ENCODE measurements at regions of chr6 and their contacts with region 1.

Region 1: DNA sequence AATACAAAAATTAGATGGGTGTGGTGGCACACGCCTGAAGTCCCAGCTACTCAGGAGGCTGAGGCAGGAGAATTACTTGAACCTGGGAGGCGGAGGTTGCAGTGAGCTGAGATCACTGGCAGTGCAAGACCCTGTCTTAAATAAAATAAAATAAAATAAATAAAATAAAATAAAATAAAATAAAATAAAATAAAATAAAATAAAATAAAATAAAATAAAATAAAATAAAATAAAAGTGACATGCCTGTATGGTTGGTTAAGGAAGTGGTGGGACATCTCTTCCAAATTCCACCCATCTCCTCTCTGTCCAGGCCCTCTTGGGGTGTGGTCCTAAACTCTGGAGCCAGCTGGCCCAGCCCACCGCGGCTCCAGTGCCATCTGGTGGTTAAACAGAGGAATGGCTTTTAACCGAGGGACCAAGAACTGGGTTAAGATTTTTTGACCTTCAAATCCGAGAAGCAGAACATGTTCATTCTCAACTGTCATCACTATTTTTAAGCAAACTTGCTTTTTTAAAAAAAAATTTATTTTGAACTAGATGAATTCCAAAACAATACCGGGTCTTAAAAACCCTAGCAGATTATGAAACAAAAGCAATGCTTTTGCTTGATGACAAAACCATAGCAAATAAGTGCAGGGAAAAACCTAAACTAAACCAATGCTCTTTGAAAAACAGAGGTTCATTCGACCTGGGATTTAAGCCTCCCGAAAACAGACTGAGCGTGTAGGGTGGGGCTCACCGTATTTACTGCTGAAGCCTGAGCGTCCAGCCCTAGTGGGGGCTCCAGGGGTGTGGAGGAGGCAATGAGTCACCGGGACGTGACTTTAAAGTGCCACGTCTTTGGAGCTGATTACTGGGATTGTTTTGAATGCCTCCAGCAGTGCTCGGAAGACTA is 68.8 kb downstream of the CDC5L start:
- DNase-seq: peak; percentile 56
- H3K4me3 Mint-ChIP-seq: no peak overlapping the region
- H3K27ac Mint-ChIP-seq: no peak overlapping the region
- H3K4me1 Mint-ChIP-seq: no peaks in the 10 kb centered on the region
- H3K27me3 Mint-ChIP-seq: peaks cover 3% of the 10 kb centered on the region

Region 2: DNA sequence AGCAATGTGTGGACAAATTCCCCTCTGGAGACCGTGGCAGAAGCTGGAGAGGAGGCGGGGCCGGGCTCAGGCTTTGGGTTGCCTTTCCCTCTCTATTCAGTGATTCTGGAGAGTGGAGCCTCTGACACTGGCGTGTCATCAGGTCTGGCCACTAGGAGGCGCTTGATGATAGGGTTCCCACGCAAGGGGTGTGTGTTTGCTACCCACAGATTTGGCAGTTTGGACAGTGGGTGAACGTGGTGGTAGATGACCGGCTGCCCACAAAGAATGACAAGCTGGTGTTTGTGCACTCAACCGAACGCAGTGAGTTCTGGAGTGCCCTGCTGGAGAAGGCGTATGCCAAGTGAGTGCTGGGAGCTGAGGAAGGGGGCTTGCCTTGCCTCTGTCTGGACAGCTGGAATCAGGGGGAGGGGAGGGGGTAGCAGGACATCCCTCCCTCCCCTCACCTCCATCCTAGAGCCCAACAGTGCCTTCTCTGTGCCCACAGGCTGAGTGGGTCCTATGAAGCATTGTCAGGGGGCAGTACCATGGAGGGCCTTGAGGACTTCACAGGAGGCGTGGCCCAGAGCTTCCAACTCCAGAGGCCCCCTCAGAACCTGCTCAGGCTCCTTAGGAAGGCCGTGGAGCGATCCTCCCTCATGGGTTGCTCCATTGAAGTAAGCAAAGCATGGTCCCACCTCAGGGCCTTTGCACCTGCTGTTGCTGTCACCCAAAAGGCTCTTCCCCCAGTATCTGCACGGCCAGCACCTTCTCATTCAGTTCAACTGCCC is 283.4 kb before region 1 on chr6:
- CTCF ChIA-PET with region 1: no interaction called
- intact Hi-C with region 1: loop called (anchors 2 kb)
- DNase-seq: peak; percentile 89
- H3K4me3 Mint-ChIP-seq: no peak overlapping the region
- H3K27ac Mint-ChIP-seq: no peak overlapping the region
- H3K4me1 Mint-ChIP-seq: peaks cover 4% of the 10 kb centered on the region
- H3K27me3 Mint-ChIP-seq: peaks cover 6% of the 10 kb centered on the region

Region 3: GRCh38 chr6:44431118-44431725 is 25.1 kb before region 1 on chr6:
- CTCF ChIA-PET with region 1: interaction called, 12 read pairs
- intact Hi-C with region 1: loop called (anchors 1 kb)
- DNase-seq: peak; percentile 68
- H3K4me3 Mint-ChIP-seq: no peak overlapping the region
- H3K27ac Mint-ChIP-seq: no peak overlapping the region
- H3K4me1 Mint-ChIP-seq: peaks cover 2% of the 10 kb centered on the region
- H3K27me3 Mint-ChIP-seq: no peaks in the 10 kb centered on the region

Region 4: DNA sequence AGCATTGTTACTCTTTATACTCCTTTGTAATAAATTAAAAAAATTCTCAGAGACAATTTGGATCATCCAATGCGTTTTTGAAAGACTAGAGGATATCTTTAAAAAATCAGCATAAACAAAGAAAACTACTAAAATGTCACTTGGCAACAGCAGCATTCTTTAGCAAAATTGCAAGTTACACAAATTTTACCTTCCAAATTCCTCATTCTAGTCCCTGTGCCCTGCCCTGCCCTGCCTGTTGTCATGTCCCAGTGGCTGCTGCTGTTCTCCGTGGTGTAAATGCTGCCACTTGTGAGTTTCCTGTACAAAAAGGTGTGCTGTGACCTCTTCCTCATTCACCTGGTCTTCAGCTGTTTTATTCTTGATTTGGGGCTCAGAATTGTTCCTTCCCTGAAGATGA is 14.4 kb after region 1 on chr6:
- CTCF ChIA-PET with region 1: interaction called, 13 read pairs
- intact Hi-C with region 1: no loop called
- DNase-seq: no peak
- H3K4me3 Mint-ChIP-seq: no peak overlapping the region
- H3K27ac Mint-ChIP-seq: no peak overlapping the region
- H3K4me1 Mint-ChIP-seq: no peaks in the 10 kb centered on the region
- H3K27me3 Mint-ChIP-seq: no peaks in the 10 kb centered on the region

Measured in activated naive CD4-positive, alpha-beta T cell treated with anti-CD3 and anti-CD28 coated beads for 36 hours (primary cell).